Activated B cell treated with CpG ODN at 0.5 μM for 24 hours (primary cell): ENCODE measurements at regions of chr14 and their contacts with region 1.

Region 1: DNA sequence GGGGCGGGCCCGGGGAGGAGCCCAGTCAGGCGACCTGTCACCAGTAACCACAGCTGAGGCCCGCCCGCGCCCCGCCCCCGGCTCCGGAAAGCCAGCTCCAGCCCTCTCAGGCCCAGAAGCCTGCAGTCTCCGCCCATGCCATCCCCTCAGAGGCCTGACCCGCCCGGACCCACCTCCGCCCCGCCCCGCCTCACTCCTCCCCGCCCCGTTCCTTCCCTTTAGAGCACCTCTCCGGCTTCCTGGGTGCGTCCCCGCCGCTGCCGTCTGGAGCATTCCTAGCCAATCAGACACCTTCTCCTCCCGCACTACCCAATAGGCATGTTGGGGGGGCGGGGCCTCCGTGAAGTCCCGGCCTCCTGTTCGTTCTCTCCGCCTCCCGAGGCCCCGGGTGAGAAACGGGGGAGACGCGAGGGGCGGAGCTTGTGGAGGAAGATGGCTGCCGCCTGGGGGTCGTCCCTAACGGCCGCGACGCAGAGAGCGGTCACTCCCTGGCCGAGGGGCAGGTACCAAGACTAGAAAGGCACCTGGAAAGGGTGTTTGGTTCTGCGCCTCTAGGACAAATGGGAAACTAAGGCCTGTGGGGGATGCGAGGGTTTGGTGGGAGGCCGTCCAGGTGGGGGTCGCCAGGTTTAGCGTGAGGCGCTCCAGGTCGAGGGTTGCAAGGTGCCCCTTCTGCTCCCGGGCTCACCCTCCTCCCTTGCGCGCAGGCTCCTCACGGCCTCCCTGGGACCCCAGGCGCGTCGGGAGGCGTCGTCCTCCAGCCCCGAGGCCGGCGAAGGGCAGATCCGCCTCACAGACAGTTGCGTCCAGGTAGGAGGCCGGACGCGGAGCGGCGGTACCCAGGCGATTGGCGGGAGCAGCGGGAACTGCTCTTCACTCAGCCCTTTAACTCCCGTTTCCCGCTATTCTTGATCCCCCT is at the start of gene ISCA2:
- DNase-seq: peak; percentile 98
- ATAC-seq: peak; percentile 90
- H3K4me3 Mint-ChIP-seq: no peak within 1 kb of the TSS
- H3K27ac Mint-ChIP-seq: no peak within 1 kb of the TSS
- H3K4me1 Mint-ChIP-seq: peaks cover 34% of the 10 kb centered on the region
- H3K27me3 Mint-ChIP-seq: no peaks in the 10 kb centered on the region
- CTCF ChIP-seq: no peak
- total RNA-seq, gene ISCA2: 35.0 and 35.3 TPM in 2 replicates

Region 2: GRCh38 chr14:74362361-74362915 is 131.2 kb before region 1 on chr14:
- CTCF ChIA-PET with region 1: interaction called, 14 read pairs
- POLR2A ChIA-PET with region 1: interaction called, 3 read pairs
- intact Hi-C with region 1: loop called (anchors 1 kb)
- DNase-seq: peak; percentile 56
- ATAC-seq: peak; percentile 87
- H3K4me3 Mint-ChIP-seq: no peak overlapping the region
- H3K27ac Mint-ChIP-seq: no peak overlapping the region
- H3K4me1 Mint-ChIP-seq: peaks cover 3% of the 10 kb centered on the region
- H3K27me3 Mint-ChIP-seq: peaks cover 2% of the 10 kb centered on the region
- CTCF ChIP-seq: peak; percentile 80

Region 3: GRCh38 chr14:74475678-74476077 is 17.9 kb before region 1 on chr14:
- CTCF ChIA-PET with region 1: no interaction called
- POLR2A ChIA-PET with region 1: no interaction called
- intact Hi-C with region 1: no loop called
- DNase-seq: no peak
- ATAC-seq: no peak
- H3K4me3 Mint-ChIP-seq: no peak overlapping the region
- H3K27ac Mint-ChIP-seq: no peak overlapping the region
- H3K4me1 Mint-ChIP-seq: no peaks in the 10 kb centered on the region
- H3K27me3 Mint-ChIP-seq: no peaks in the 10 kb centered on the region
- CTCF ChIP-seq: no peak

Region 4: DNA sequence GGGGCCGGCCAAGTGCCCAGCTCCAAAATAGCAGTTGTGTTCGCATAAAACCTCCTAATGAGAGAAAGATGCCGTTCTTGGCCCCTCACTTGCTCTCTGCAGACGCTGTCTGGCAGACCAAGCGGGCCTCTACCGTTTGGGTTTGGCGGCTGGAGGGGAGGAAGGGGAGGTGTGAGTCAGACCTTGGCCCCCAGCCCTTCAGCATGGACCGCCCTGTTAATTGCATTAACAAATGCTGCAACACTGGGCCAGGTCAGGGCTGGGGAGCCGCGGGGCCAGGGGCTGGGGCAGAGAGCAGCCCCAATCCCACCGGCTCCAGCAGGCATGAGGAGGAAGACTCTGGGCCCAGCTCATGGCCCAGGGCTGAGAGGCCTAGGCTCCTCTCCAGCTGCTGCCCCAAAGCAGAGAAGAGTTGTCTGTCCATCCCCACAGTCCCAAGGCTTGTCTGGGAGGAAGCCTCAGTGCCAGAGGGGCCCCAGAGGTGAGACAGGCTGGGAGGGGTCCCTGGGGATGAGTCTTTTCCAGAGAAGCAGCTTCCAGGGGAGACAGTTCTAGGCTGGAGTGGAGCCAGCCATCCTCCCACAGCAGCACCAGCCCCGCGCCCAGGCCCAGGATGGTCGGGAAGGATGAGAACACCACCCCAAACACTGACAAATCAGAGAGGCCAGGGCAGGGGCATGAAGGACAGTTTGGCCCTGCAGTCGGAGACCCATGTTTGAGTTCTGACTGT is 101.6 kb after region 1 on chr14:
- CTCF ChIA-PET with region 1: no interaction called
- POLR2A ChIA-PET with region 1: no interaction called
- intact Hi-C with region 1: loop called (anchors 2 kb)
- DNase-seq: no peak
- ATAC-seq: no peak
- H3K4me3 Mint-ChIP-seq: no peak overlapping the region
- H3K27ac Mint-ChIP-seq: no peak overlapping the region
- H3K4me1 Mint-ChIP-seq: peaks cover 29% of the 10 kb centered on the region
- H3K27me3 Mint-ChIP-seq: no peaks in the 10 kb centered on the region
- CTCF ChIP-seq: no peak

Region 5: GRCh38 chr14:74881431-74882361 is 388.1 kb after region 1 on chr14 and contains the start of gene DLST:
- CTCF ChIA-PET with region 1: no interaction called
- POLR2A ChIA-PET with region 1: interaction called, 5 read pairs
- intact Hi-C with region 1: loop called (anchors 2 kb)
- DNase-seq: peak; percentile 88
- ATAC-seq: peak; percentile 86
- H3K4me3 Mint-ChIP-seq: peak within 1 kb of the TSS; percentile 99
- H3K27ac Mint-ChIP-seq: peak within 1 kb of the TSS; percentile 97
- H3K4me1 Mint-ChIP-seq: peaks cover 51% of the 10 kb centered on the region
- H3K27me3 Mint-ChIP-seq: no peaks in the 10 kb centered on the region
- CTCF ChIP-seq: no peak
- total RNA-seq, gene DLST: 73.1 and 90.4 TPM in 2 replicates